Calu3 (cell line): ENCODE measurements at regions of chrX and their contacts with region 1.

Region 1: GRCh38 chrX:115650916-115651315 is 89.9 kb downstream of the PLS3 start:
- DNase-seq: peak; percentile 28
- H3K4me3 Mint-ChIP-seq: no peak overlapping the region
- H3K27ac Mint-ChIP-seq: no peak overlapping the region
- H3K4me1 Mint-ChIP-seq: no peaks in the 10 kb centered on the region
- H3K27me3 Mint-ChIP-seq: no peaks in the 10 kb centered on the region
- CTCF ChIP-seq: peak; percentile 34

Region 2: DNA sequence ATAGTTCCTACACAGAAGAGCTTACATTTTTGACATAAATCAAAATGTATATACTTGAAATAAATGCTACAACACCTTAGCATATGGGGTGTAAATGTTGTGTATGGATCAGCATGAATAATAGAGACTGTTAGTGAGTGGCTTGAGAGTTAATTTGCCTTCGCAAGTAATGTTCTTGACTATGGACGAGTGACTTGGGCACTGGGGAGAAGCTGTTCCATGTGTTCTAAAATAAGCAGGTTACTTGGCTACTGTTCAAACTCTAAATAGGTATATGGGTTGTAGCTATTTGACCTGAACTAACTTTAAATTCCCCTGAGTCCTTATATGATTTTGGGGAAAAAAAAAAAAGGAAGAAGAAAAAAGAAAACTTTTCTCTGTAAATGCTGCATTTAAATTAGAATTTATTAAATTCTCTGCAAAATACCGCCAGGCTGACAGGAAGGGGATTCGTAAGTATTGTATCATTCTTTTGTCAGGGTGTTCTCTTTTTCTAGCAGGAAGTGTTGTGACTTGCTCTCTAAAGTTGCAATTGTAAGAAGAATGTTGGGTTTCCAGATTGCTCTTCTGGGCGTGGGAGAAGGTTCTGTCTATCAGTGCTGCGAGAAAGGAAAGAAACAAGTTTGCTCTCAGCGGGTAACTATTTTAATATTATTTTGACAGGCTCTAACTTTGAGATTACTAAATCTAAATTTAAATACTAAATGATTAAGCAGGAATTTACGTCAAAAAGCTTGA is 57.8 kb before region 1 on chrX:
- CTCF ChIA-PET with region 1: no interaction called
- intact Hi-C with region 1: no loop called
- DNase-seq: no peak
- H3K4me3 Mint-ChIP-seq: peak overlapping the region; percentile 63
- H3K27ac Mint-ChIP-seq: peak overlapping the region; percentile 97
- H3K4me1 Mint-ChIP-seq: peaks cover 43% of the 10 kb centered on the region
- H3K27me3 Mint-ChIP-seq: no peaks in the 10 kb centered on the region
- CTCF ChIP-seq: no peak

Region 3: GRCh38 chrX:115690511-115691216 is 39.7 kb after region 1 on chrX:
- CTCF ChIA-PET with region 1: interaction called, 4 read pairs
- intact Hi-C with region 1: loop called (anchors 5 kb)
- DNase-seq: peak; percentile 45
- H3K4me3 Mint-ChIP-seq: no peak overlapping the region
- H3K27ac Mint-ChIP-seq: no peak overlapping the region
- H3K4me1 Mint-ChIP-seq: no peaks in the 10 kb centered on the region
- H3K27me3 Mint-ChIP-seq: no peaks in the 10 kb centered on the region
- CTCF ChIP-seq: no peak